ENCODE measurements at regions of chr14 and their contacts with region 1.

Region 1: DNA sequence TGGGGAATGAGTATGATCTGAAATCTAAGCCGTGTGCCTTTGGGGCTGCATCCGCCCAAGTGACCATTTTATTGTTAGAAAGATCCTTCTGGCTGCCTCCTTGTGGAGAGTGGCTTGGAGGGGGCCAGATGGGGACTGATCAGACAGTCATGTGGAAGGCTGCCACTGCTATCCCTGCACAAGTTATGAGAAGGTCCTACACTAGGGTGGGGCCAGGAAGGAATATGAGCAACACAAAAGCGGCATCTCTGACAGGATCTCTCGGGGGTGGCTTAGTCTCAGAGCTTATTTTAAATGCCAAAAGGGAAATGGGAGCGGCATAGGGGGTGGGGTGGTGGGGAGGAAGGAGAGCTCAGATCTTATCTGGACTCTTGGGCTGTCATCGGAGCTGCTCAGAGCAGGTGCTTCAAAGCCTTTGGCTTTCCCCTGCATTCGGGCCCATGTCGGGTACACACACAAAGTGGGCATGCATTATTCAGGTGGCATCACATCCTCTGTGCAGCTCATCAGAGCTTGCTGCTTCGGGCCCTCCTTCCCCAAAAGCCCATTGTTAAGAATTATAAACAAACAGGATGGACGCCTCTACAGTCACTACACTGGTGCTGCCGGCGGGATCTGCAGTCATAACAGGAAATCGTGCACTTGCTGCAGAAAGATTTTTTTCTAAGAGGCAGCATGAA is 805.4 kb downstream of the VRK1 start:
- DNase-seq: peak; percentile 66 to 93 (median 78)
- ATAC-seq: peak; percentile 88
- H3K4me3 ChIP-seq: peak overlapping the region; percentile 32
- H3K4me3 Mint-ChIP-seq: no peak overlapping the region
- H3K27ac ChIP-seq: peak overlapping the region; percentile 77 to 86
- H3K27ac Mint-ChIP-seq: no peak overlapping the region
- H3K4me1 ChIP-seq: peaks cover 52% of the 10 kb centered on the region
- H3K4me1 Mint-ChIP-seq: no peaks in the 10 kb centered on the region
- H3K27me3 ChIP-seq: no peaks in the 10 kb centered on the region
- H3K27me3 Mint-ChIP-seq: no peaks in the 10 kb centered on the region
- CTCF ChIP-seq: no peak

Region 2: DNA sequence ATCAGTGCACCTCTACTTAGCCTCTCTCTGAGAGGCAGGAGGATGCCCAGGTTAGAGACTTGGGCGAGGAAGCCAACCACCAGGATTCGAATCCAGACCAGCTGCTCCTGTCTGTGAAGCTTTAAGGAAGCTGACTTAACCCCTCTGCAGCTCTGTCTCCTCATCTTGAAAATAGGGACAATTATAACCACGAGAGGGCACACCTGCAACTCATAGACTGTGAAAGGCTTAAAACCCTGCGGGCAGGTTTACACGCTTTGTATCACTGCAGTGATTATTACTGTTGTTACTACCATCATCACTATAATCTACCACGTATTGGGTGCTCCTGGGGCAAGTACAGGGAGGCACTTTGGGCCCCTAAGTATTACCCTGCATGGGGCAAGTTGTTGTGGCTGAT is 425.6 kb before region 1 on chr14:
- CTCF ChIA-PET with region 1: no interaction called
- POLR2A ChIA-PET with region 1: no interaction called
- intact Hi-C with region 1: loop called (anchors 5 to 10 kb)
- DNase-seq: peak in 13 of 14 experiments; percentile 4 to 71 (median 23)
- ATAC-seq: peak; percentile 71
- H3K4me3 ChIP-seq: no peak overlapping the region
- H3K4me3 Mint-ChIP-seq: no peak overlapping the region
- H3K27ac ChIP-seq: no peak overlapping the region
- H3K27ac Mint-ChIP-seq: peak overlapping the region; percentile 16
- H3K4me1 ChIP-seq: peaks cover 21% of the 10 kb centered on the region
- H3K4me1 Mint-ChIP-seq: peaks cover 35% of the 10 kb centered on the region
- H3K27me3 ChIP-seq: no peaks in the 10 kb centered on the region
- H3K27me3 Mint-ChIP-seq: no peaks in the 10 kb centered on the region
- CTCF ChIP-seq: peak; percentile 41

Region 3: GRCh38 chr14:97408937-97409815 is 193.4 kb before region 1 on chr14:
- CTCF ChIA-PET with region 1: no interaction called
- POLR2A ChIA-PET with region 1: interaction called, 3 read pairs
- intact Hi-C with region 1: loop called in 1 of 2 experiments (anchors 2 kb)
- DNase-seq: peak in 5 of 14 experiments; percentile 25 to 52 (median 42)
- ATAC-seq: peak; percentile 47
- H3K4me3 ChIP-seq: no peak overlapping the region
- H3K4me3 Mint-ChIP-seq: peak overlapping the region; percentile 74
- H3K27ac ChIP-seq: no peak overlapping the region
- H3K27ac Mint-ChIP-seq: peak overlapping the region; percentile 80
- H3K4me1 ChIP-seq: peaks cover 21% of the 10 kb centered on the region
- H3K4me1 Mint-ChIP-seq: peaks cover 30% of the 10 kb centered on the region
- H3K27me3 ChIP-seq: peaks cover 9 to 18% of the 10 kb centered on the region in 2 experiments
- H3K27me3 Mint-ChIP-seq: no peaks in the 10 kb centered on the region
- CTCF ChIP-seq: no peak

Region 4: DNA sequence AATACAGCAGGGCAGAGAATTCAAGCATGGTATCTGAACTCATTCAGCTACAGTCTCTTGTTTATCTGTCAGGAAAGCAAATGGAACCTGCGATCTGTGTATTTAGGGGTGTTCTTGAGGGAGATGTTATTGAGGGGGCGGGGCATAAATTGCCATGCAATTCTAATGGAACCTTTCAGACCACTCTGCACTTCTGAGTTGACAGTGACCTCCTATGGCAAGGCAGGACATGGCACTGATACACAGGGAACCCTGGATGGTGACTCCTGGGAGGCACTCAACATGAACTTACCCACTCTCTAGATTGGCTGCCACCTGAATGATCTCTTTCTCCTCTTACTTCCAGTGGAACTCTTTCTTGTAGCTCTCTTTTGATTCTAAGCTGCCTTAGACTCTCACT is 18.1 kb before region 1 on chr14:
- CTCF ChIA-PET with region 1: no interaction called
- POLR2A ChIA-PET with region 1: interaction called, 11 read pairs
- intact Hi-C with region 1: no loop called
- DNase-seq: peak in 1 of 14 experiments; percentile 13
- ATAC-seq: no peak
- H3K4me3 ChIP-seq: no peak overlapping the region
- H3K4me3 Mint-ChIP-seq: no peak overlapping the region
- H3K27ac ChIP-seq: no peak overlapping the region
- H3K27ac Mint-ChIP-seq: no peak overlapping the region
- H3K4me1 ChIP-seq: peaks cover 6% of the 10 kb centered on the region
- H3K4me1 Mint-ChIP-seq: peaks cover 18% of the 10 kb centered on the region
- H3K27me3 ChIP-seq: no peaks in the 10 kb centered on the region
- H3K27me3 Mint-ChIP-seq: no peaks in the 10 kb centered on the region
- CTCF ChIP-seq: no peak

Region 5: DNA sequence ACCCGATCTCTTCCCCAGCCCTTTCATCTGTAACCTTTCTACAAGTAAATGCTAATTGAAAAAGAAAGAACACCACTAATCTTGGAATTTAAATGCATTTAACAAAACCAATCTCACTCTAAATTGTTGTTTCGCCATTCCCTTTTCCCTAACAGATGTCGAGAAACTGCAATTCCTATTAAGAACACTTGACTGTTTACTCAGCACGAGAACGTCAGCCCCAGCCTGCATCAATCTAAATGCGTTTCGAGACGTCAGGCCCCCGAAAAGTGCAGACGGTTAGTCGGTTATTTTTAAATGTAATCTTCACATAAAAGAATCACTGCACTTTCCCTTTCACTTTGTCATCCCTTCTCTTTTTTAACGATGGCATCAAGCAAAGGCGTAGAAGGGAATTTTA is 32.2 kb after region 1 on chr14:
- CTCF ChIA-PET with region 1: interaction called, 4 read pairs
- POLR2A ChIA-PET with region 1: interaction called, 6 read pairs
- intact Hi-C with region 1: loop called in 1 of 2 experiments (anchors 2 kb)
- DNase-seq: peak; percentile 10 to 69 (median 41)
- ATAC-seq: peak; percentile 94
- H3K4me3 ChIP-seq: peak overlapping the region; percentile 49
- H3K4me3 Mint-ChIP-seq: peak overlapping the region; percentile 86
- H3K27ac ChIP-seq: no peak overlapping the region
- H3K27ac Mint-ChIP-seq: peak overlapping the region; percentile 75
- H3K4me1 ChIP-seq: peaks cover 7% of the 10 kb centered on the region
- H3K4me1 Mint-ChIP-seq: peaks cover 64% of the 10 kb centered on the region
- H3K27me3 ChIP-seq: no peaks in the 10 kb centered on the region
- H3K27me3 Mint-ChIP-seq: no peaks in the 10 kb centered on the region
- CTCF ChIP-seq: no peak

Region 6: DNA sequence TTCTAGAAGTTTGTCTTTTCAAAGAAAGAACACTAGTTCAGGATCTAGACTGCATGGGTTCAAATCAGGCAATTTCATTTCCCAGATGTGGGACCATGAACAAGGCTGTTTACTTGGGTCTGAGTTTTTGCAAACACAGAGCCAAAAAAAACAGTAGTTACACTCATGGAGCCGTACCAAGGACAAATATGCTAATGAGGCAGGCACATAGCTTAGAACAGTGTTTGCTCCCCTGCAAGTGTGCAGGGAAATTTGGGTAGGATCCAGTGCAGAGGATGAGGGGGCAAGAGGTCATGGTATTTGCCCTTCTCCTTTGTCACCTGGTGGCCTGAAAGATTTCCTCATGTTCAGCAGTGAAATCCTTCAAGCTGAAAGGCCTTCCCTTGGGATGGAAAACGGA is 55.0 kb after region 1 on chr14:
- CTCF ChIA-PET with region 1: no interaction called
- POLR2A ChIA-PET with region 1: no interaction called
- intact Hi-C with region 1: no loop called
- DNase-seq: no peak
- ATAC-seq: no peak
- H3K4me3 ChIP-seq: no peak overlapping the region
- H3K4me3 Mint-ChIP-seq: no peak overlapping the region
- H3K27ac ChIP-seq: no peak overlapping the region
- H3K27ac Mint-ChIP-seq: no peak overlapping the region
- H3K4me1 ChIP-seq: no peaks in the 10 kb centered on the region
- H3K4me1 Mint-ChIP-seq: peaks cover 19% of the 10 kb centered on the region
- H3K27me3 ChIP-seq: no peaks in the 10 kb centered on the region
- H3K27me3 Mint-ChIP-seq: no peaks in the 10 kb centered on the region
- CTCF ChIP-seq: no peak

Region 7: DNA sequence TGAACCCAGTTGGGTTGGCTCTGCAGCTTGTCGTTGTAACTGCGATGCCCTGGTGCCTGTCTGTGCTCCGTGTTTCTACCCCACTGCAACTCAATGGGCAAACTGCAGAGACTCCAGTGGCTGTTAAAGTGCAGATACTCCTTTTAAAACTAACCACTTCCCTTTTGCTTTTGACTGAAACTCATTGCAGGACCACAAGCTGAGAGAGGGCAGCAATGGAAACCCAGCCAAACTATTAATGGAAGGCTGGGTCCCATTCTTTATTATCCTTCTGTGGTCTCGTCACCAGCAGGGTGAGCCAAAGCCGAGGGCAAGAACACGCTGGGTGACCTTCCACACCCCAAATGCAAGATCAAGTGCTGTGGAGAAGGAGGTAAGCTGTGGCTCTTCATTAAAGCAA is 105.0 kb after region 1 on chr14:
- CTCF ChIA-PET with region 1: interaction called, 3 read pairs
- POLR2A ChIA-PET with region 1: interaction called, 12 read pairs
- intact Hi-C with region 1: no loop called
- DNase-seq: peak in 5 of 14 experiments; percentile 18 to 65 (median 51)
- ATAC-seq: peak; percentile 14
- H3K4me3 ChIP-seq: no peak overlapping the region
- H3K4me3 Mint-ChIP-seq: peak overlapping the region; percentile 16
- H3K27ac ChIP-seq: peak overlapping the region in 1 of 2 donors; percentile 29
- H3K27ac Mint-ChIP-seq: peak overlapping the region; percentile 71
- H3K4me1 ChIP-seq: peaks cover 62% of the 10 kb centered on the region
- H3K4me1 Mint-ChIP-seq: peaks cover 100% of the 10 kb centered on the region
- H3K27me3 ChIP-seq: no peaks in the 10 kb centered on the region
- H3K27me3 Mint-ChIP-seq: no peaks in the 10 kb centered on the region
- CTCF ChIP-seq: no peak

Region 8: GRCh38 chr14:99192028-99192621 is 1589.5 kb after region 1 on chr14:
- CTCF ChIA-PET with region 1: no interaction called
- POLR2A ChIA-PET with region 1: interaction called, 3 read pairs
- intact Hi-C with region 1: loop called in 1 of 2 experiments (anchors 10 kb)
- DNase-seq: peak in 5 of 14 experiments; percentile 40 to 72 (median 64)
- ATAC-seq: peak; percentile 40
- H3K4me3 ChIP-seq: peak overlapping the region; percentile 59
- H3K4me3 Mint-ChIP-seq: peak overlapping the region; percentile 89
- H3K27ac ChIP-seq: peak overlapping the region; percentile 77 to 81
- H3K27ac Mint-ChIP-seq: peak overlapping the region; percentile 95
- H3K4me1 ChIP-seq: peaks cover 99% of the 10 kb centered on the region
- H3K4me1 Mint-ChIP-seq: peaks cover 97% of the 10 kb centered on the region
- H3K27me3 ChIP-seq: no peaks in the 10 kb centered on the region
- H3K27me3 Mint-ChIP-seq: no peaks in the 10 kb centered on the region
- CTCF ChIP-seq: no peak

Measured in CD4-positive, alpha-beta T cell (primary cell).